ENCODE measurements at regions of chr3 and their contacts with region 1.

Region 1: DNA sequence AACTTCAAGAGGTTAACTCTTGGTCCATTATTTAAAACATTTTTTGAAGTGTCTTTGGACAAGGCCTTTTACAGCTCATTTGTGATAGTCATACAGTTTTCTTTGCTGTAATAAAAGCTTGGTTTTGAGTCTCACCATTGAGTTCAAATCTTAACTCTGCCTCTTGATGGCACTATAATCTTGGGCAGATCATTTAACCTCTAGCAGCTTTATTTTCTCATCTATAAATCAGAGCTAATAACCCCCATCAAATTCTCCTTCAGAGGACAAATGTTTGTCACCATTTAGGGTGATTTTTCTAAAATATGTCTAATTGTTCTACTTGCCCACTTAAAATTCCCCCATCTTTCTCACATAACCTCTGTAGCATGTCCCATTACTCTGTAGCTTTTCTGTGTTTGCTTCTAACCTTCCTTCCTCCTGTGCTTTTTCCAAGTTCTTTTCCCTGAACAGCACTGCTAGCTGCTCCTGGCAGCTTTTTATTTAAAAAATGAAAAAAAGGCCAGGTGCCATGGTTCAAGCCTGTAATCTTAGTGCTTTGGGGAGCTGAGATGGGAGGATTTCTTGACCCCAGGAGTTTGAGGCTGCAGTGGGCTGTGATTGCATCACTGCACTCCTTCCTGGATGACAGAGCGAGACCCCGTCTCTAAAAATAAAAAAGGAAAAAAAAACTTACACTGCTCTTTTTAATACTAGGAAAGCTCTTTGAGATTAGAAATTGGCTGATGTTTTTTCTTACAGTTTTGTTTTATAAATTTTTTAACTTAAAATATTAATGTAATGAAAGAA is 28.5 kb downstream of the UBE2E1 start:
- DNase-seq: no peak
- ATAC-seq: no peak
- H3K4me3 ChIP-seq: no peak overlapping the region
- H3K27ac ChIP-seq: no peak overlapping the region
- H3K4me1 ChIP-seq: peaks cover 56% of the 10 kb centered on the region
- H3K27me3 ChIP-seq: no peaks in the 10 kb centered on the region
- CTCF ChIP-seq: peak in 2 of 3 experiments; percentile 36 to 53; a peak in 5 of 6 replicates
- EP300 ChIP-seq: no peak
- POLR2A ChIP-seq: no peak
- RAD21 ChIP-seq: peak; percentile 65

Region 2: DNA sequence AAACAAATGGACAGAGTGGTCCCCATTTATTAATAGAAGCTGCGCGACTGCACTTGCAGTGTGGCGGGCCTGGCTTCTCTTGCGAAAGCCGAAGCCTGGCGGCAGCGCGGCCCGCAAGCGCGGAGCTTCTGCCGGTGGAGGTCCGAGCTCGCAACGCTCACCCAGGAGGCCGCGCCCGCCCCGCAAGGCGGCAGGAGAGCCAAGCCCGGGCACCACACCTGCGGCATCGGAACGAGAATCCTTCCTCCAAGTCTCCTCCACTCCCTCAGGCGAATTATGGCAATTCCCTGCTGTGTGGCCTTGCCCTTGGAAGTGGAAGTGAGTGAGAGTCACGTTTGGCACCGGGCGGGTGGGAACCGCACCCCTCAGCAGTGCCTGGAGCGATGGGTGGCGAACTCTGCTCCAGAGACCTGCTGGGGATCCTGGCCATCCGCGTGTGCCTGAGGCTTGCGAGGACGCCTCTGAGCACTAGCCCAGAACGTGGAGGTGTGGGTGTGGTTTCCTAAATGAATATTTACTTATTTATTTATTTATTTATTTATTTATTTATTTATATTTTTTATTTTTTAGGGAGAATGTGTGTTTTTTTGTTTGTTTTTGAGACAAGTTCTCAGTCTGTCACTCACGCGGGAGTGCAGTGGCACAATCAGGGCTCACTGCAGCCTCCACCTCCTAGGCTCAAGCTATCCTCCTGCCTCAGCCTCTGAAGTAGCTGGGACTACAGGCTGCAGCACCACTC is 162.3 kb before region 1 on chr3:
- CTCF ChIA-PET with region 1: no interaction called
- POLR2A ChIA-PET with region 1: no interaction called
- RAD21 ChIA-PET with region 1: no interaction called
- SMC1A ChIA-PET with region 1: no interaction called
- in situ Hi-C with region 1: no loop called
- intact Hi-C with region 1: no loop called
- DNase-seq: no peak
- ATAC-seq: no peak
- H3K4me3 ChIP-seq: no peak overlapping the region
- H3K27ac ChIP-seq: no peak overlapping the region
- H3K4me1 ChIP-seq: peaks cover 16% of the 10 kb centered on the region
- H3K27me3 ChIP-seq: no peaks in the 10 kb centered on the region
- CTCF ChIP-seq: no peak
- EP300 ChIP-seq: no peak
- POLR2A ChIP-seq: no peak
- RAD21 ChIP-seq: no peak

Region 3: DNA sequence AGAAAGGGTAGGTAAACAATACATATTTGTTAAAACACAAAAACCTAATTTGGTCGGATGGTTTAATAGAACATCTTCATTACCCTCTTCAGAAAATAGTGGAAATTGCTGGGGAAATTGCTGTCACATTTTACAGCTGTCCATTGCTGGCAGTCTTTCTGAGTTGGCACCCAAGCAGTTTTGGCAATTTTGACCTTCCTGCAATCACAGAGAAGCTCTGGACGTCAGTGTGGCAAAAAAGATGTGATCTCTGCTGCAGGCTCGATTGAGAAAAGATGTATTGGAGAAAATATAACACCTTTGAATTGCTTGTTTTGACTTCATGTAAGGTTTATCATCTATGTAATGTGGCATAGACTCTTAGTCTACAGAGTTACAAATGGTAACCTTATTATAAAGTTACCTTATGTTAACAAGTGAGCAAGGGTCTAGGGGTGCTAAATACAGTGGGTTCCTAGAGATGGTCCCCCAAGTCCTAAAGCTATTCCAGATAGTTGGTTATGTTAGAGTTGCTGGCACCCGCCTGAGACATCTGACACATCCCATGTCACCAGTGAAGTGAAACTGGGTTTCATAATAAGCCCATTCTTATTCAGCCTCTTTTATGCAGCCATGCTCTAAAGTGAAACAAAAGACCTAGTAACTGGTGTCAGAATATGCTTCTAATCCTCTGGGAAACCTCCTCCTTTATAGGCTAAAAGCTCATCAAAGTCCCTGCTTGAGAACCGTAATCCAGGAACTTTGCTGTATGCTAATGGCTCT is 14.5 kb before region 1 on chr3:
- CTCF ChIA-PET with region 1: interaction called, 36 read pairs
- POLR2A ChIA-PET with region 1: interaction called, 4 read pairs
- RAD21 ChIA-PET with region 1: interaction called, 10 read pairs
- SMC1A ChIA-PET with region 1: interaction called, 54 read pairs
- in situ Hi-C with region 1: no loop called
- intact Hi-C with region 1: no loop called
- DNase-seq: no peak
- ATAC-seq: peak; percentile 79
- H3K4me3 ChIP-seq: no peak overlapping the region
- H3K27ac ChIP-seq: peak overlapping the region; percentile 20; the same call in 1 of the 2 replicates
- H3K4me1 ChIP-seq: peaks cover 27% of the 10 kb centered on the region
- H3K27me3 ChIP-seq: no peaks in the 10 kb centered on the region
- CTCF ChIP-seq: no peak
- EP300 ChIP-seq: no peak
- POLR2A ChIP-seq: no peak
- RAD21 ChIP-seq: no peak

Region 4: GRCh38 chr3:23859016-23859743 is 24.9 kb after region 1 on chr3:
- CTCF ChIA-PET with region 1: interaction called, 94 read pairs
- POLR2A ChIA-PET with region 1: interaction called, 14 read pairs
- RAD21 ChIA-PET with region 1: interaction called, 62 read pairs
- SMC1A ChIA-PET with region 1: interaction called, 171 read pairs
- in situ Hi-C with region 1: no loop called
- intact Hi-C with region 1: no loop called
- DNase-seq: no peak
- ATAC-seq: no peak
- H3K4me3 ChIP-seq: no peak overlapping the region
- H3K27ac ChIP-seq: no peak overlapping the region
- H3K4me1 ChIP-seq: peaks cover 30% of the 10 kb centered on the region
- H3K27me3 ChIP-seq: no peaks in the 10 kb centered on the region
- CTCF ChIP-seq: no peak
- EP300 ChIP-seq: no peak
- POLR2A ChIP-seq: no peak
- RAD21 ChIP-seq: no peak

Region 5: DNA sequence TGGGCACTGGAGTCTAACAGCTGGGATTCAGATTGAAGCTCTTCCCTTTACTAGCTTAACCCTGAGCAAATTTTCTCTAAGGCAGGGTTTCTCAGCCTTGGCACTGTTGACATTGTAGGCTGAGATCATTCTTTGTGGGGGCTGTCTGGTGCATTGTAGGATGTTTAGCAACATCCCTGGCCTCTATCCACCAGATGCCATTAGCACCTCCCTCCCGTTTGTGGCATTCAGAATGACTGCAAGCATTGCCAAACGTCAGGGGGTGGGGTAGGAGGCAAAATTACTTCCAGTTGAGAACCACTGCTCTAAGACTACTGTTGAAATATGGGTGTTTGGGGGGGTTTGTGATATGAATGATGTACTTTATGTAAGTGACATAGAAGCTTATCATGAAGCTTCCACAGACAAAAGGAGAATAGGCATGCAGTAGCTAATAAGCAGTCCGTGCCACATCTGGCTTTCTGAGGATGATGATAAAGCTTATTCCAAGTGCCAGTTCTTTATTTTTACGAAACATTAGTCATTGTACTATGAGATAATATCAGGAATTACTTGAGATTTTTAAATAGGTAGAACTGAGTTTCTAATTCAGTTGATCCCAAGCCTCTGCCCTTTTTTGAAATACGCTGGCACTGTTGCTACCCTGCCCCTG is 43.2 kb after region 1 on chr3:
- CTCF ChIA-PET with region 1: interaction called, 12 read pairs
- POLR2A ChIA-PET with region 1: no interaction called
- RAD21 ChIA-PET with region 1: interaction called, 5 read pairs
- SMC1A ChIA-PET with region 1: interaction called, 9 read pairs
- in situ Hi-C with region 1: no loop called
- intact Hi-C with region 1: no loop called
- DNase-seq: no peak
- ATAC-seq: no peak
- H3K4me3 ChIP-seq: no peak overlapping the region
- H3K27ac ChIP-seq: no peak overlapping the region
- H3K4me1 ChIP-seq: no peaks in the 10 kb centered on the region
- H3K27me3 ChIP-seq: no peaks in the 10 kb centered on the region
- CTCF ChIP-seq: no peak
- EP300 ChIP-seq: no peak
- POLR2A ChIP-seq: no peak
- RAD21 ChIP-seq: no peak

Region 6: DNA sequence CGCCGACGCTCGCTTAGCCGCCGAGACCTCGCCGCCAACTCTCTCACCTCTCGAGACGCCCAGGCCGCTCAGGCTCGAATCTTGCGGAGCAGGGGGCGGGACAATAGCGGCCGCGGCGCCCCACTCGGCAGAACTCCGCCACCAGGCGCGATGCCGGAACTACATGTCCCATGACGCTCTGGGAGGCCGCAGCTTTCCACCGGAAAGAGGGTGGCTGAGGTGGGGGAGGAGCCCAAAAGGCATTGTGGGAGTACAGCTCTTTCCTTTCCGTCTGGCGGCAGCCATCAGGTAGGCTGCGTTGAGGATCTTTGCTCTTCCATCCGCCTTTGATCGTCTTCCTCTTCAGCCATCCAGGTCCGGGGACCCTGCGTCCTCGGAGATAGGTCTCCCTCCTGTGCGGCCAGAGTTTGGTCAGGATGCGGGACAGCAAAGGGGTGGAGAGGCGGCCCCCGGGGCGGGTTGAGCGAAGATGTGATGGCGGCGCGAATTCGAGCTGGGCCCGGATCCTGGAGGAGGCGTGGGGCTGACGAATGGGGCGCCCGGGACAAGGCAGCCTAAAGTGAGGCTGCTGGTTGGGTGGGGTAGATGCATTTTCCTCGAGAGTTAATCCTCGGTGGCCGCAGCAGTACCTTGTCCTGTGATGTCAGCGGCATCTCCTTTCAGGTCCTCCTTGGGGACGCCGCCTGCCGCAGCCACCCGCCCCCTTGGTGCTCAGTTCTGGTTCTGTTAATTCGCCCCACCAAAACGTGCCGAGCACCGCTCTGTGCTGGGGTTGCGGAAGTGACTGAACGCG is 82.8 kb after region 1 on chr3 and contains the starts of genes NKIRAS1 and RPL15:
- CTCF ChIA-PET with region 1: interaction called, 8 read pairs
- POLR2A ChIA-PET with region 1: interaction called, 4 read pairs
- RAD21 ChIA-PET with region 1: interaction called, 10 read pairs
- SMC1A ChIA-PET with region 1: interaction called, 13 read pairs
- in situ Hi-C with region 1: no loop called
- intact Hi-C with region 1: no loop called
- DNase-seq: peak; percentile 89
- ATAC-seq: peak; percentile 90
- H3K4me3 ChIP-seq: peak within 1 kb of the TSS; percentile 100
- H3K27ac ChIP-seq: peak within 1 kb of the TSS; percentile 95
- H3K4me1 ChIP-seq: peaks cover 3% of the 10 kb centered on the region
- H3K27me3 ChIP-seq: no peaks in the 10 kb centered on the region
- CTCF ChIP-seq: peak in 2 of 3 experiments; percentile 15 to 38; a peak in 2 of 6 replicates
- EP300 ChIP-seq: peak; percentile 42 to 71; a peak in 2 of 4 replicates
- POLR2A ChIP-seq: peak; percentile 100
- RAD21 ChIP-seq: no peak
- polyA plus RNA-seq, gene NKIRAS1: 8.9 to 10.2 TPM
- polyA plus RNA-seq, gene RPL15: 6,967 to 10,761 TPM

Region 7: DNA sequence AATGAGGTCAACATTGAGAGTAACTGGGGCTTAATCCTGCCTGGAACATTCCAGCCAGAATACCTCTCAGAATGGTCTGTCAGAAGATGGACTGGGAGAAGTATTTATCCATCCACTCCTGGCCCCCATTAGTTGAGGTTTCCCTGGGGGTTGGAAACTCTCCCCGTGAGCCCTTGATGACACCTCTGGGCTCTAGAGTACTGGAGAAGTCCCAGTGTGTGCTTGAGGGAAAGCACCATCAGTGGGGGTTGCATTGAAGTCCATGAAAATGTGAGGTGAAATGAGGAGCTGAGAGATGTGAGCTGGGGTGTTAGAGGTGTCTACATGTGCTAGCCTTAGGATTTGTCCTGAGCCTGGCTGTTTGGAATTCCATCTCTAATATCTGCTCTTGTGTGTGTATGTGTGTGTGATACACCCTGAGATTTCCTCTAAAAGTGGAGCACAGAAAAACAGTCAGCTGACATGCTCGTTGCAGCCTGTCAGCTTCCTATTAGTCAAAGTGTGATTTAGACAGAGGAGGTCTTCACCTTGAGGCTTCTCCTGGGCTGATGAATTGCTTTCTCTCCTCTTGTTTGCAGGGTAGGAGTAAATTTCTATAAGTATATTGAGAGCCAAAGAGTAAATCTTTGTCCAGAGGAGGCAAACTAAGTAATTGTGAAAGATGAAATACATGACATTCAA is 178.5 kb after region 1 on chr3:
- CTCF ChIA-PET with region 1: no interaction called
- POLR2A ChIA-PET with region 1: no interaction called
- RAD21 ChIA-PET with region 1: no interaction called
- SMC1A ChIA-PET with region 1: no interaction called
- in situ Hi-C with region 1: no loop called
- intact Hi-C with region 1: no loop called
- DNase-seq: no peak
- ATAC-seq: peak; percentile 66
- H3K4me3 ChIP-seq: no peak overlapping the region
- H3K27ac ChIP-seq: no peak overlapping the region
- H3K4me1 ChIP-seq: no peaks in the 10 kb centered on the region
- H3K27me3 ChIP-seq: no peaks in the 10 kb centered on the region
- CTCF ChIP-seq: no peak
- EP300 ChIP-seq: no peak
- POLR2A ChIP-seq: no peak
- RAD21 ChIP-seq: no peak

Measured in GM12878 (cell line).